ENCODE measurements at regions of chr5 and their contacts with region 1.

Region 1: DNA sequence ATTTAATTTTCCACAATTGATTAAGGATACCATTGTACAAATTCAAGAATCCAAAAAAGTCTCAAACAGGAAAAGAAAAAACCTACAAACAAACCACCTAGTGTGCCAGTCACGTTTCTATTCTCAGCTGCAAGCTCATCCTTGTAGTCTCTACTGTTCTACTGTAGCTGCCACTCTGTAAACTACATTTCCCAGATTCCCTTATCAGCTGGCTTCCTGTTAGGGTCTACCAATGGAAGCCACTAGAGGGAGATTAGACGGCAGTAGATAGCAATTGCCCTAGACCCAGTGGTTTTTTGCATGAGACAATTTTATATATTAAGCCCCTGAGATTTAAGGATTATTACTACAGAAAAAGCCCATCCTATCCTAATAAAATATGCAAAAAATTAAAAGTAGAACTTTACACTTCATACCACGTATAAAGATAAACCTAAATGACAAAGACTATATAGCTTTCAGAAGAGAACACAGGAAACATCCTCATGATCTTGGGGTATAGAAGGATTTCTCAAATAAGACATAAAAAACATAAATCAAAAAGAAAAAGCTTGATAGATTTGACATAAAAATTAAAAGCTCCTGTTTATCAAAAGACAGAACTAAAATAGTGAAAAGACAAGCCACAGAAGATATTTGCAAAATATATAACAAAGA is 37.4 kb downstream of the P4HA2 start:
- DNase-seq: peak; percentile 78
- H3K4me3 ChIP-seq: no peak overlapping the region
- H3K27ac ChIP-seq: no peak overlapping the region
- H3K4me1 ChIP-seq: no peaks in the 10 kb centered on the region
- H3K27me3 ChIP-seq: no peaks in the 10 kb centered on the region
- CTCF ChIP-seq: peak; percentile 75 to 76
- POLR2A ChIP-seq: no peak

Region 2: DNA sequence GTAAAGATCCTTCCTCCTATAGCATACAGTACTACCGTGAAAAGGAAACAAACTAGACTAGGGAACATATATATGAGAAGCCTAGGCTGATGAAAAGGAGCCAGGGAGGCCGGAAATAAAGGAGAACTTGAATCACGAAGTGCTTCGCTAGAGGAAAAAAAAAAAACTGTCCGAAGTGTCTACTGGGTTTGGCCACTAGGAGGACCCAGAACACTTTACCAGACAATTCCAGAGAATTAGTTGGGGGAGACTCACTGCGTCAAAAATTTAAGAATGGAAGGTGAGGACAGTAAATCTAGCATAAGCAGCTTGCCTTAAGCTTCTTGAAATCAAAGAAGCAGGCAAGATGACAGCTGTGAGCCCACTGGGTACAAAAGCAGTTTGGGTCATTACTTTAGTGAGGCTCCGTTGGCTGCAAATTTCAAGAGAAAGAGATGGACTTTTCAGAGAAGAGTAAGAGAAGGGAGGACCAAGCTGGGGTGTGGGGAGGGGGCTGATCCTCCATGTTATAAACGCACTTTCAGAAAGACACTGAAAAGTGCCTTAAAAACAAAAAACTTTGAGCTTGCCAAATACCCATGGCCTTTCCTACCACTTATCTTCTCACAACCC is 10.0 kb before region 1 on chr5:
- CTCF ChIA-PET with region 1: interaction called, 30 read pairs
- POLR2A ChIA-PET with region 1: no interaction called
- dilution Hi-C with region 1: no loop called
- intact Hi-C with region 1: no loop called
- DNase-seq: peak; percentile 78
- H3K4me3 ChIP-seq: no peak overlapping the region
- H3K27ac ChIP-seq: no peak overlapping the region
- H3K4me1 ChIP-seq: peaks cover 16% of the 10 kb centered on the region
- H3K27me3 ChIP-seq: no peaks in the 10 kb centered on the region
- CTCF ChIP-seq: peak; percentile 70 to 74
- POLR2A ChIP-seq: no peak

Region 3: DNA sequence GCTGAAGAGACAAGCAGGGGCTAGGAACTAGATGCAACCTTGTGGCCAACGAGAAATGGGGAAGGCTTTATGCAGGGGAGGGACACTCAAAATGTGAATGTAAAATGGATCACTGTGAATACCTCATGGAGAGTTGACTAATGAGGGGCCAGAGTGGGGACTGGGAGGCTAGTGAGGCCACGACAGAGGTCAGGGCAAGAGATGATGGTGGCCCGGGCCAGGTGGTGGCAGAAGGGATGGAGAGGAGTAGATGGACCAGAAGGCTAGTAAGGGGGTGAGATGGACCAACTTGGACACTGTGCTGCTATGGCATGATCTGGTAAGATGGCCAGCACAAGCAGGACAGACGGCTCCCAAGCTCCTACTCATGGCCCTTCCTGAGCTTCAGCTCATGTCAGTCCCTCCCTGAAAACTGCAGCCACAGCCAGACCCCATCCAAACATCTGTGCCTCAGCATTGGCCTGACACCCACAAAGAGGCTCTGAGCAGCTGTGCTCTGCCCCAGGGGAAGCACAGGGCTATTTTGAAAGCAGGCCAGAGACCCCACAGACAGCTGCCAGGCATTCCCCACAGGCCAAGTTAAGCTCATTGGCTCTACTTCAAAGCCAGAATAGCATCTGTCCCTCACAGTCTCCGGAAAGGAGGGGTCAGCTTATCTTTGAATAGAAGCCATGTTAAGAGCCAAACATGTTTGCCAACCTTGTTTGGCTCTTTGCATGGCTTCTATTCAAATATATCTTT is 15.3 kb after region 1 on chr5:
- CTCF ChIA-PET with region 1: interaction called, 21 read pairs
- POLR2A ChIA-PET with region 1: no interaction called
- dilution Hi-C with region 1: no loop called
- intact Hi-C with region 1: no loop called
- DNase-seq: peak; percentile 53
- H3K4me3 ChIP-seq: no peak overlapping the region
- H3K27ac ChIP-seq: no peak overlapping the region
- H3K4me1 ChIP-seq: no peaks in the 10 kb centered on the region
- H3K27me3 ChIP-seq: no peaks in the 10 kb centered on the region
- CTCF ChIP-seq: no peak
- POLR2A ChIP-seq: no peak

Region 4: GRCh38 chr5:132215329-132215728 is 25.0 kb after region 1 on chr5:
- CTCF ChIA-PET with region 1: interaction called, 12 read pairs
- POLR2A ChIA-PET with region 1: no interaction called
- dilution Hi-C with region 1: no loop called
- intact Hi-C with region 1: no loop called
- DNase-seq: peak; percentile 80
- H3K4me3 ChIP-seq: no peak overlapping the region
- H3K27ac ChIP-seq: peak overlapping the region; percentile 52
- H3K4me1 ChIP-seq: peaks cover 5% of the 10 kb centered on the region
- H3K27me3 ChIP-seq: no peaks in the 10 kb centered on the region
- CTCF ChIP-seq: no peak
- POLR2A ChIP-seq: no peak

Region 5: DNA sequence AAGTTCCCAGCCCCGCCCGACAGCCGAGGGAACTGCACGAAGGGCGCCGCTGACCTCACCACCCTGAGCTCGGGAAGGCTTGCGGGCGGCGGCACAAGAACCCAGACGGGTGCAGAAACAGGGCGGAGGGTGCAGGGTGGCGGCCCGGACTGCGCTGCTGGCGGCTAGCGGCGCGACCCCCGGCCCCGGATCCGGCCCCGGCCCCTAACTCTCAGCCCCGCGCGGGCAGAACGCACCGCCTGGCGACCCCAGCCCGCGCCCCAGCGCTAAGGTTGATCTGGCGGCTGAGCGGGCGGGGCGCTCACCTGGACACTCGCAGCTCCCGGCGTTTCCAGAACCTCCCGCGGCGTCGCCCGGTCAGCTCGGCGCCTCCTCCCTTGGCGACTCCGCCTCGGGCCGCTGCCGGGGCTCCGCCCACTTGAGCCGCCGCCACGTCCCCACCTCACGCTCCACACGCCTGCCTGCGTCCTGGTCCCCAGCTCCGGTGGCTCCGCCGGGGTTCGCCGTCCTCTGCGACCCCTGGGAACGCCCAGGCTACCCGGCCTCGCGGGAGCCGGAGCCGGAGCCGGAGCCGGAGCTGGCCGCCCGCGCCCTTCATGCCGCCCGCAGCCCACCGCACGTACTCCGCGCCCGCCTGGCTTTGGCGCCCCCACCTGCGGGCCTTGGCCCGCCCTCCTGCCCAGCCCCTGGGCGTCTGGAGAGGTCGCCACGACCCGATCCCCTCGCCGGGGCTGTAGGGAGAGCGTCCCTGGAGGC is 37.4 kb after region 1 on chr5 and contains the start of gene P4HA2:
- CTCF ChIA-PET with region 1: interaction called, 15 read pairs
- POLR2A ChIA-PET with region 1: no interaction called
- dilution Hi-C with region 1: no loop called
- intact Hi-C with region 1: loop called (anchors 2 kb)
- DNase-seq: peak; percentile 71
- H3K4me3 ChIP-seq: peak within 1 kb of the TSS; percentile 44 to 61 (median 46)
- H3K27ac ChIP-seq: peak within 1 kb of the TSS; percentile 28
- H3K4me1 ChIP-seq: no peaks in the 10 kb centered on the region
- H3K27me3 ChIP-seq: peaks cover 0 to 1% of the 10 kb centered on the region in 2 experiments
- CTCF ChIP-seq: no peak
- POLR2A ChIP-seq: peak; percentile 56
- total RNA-seq, gene P4HA2: 37.4 and 37.6 TPM in 2 replicates

Region 6: DNA sequence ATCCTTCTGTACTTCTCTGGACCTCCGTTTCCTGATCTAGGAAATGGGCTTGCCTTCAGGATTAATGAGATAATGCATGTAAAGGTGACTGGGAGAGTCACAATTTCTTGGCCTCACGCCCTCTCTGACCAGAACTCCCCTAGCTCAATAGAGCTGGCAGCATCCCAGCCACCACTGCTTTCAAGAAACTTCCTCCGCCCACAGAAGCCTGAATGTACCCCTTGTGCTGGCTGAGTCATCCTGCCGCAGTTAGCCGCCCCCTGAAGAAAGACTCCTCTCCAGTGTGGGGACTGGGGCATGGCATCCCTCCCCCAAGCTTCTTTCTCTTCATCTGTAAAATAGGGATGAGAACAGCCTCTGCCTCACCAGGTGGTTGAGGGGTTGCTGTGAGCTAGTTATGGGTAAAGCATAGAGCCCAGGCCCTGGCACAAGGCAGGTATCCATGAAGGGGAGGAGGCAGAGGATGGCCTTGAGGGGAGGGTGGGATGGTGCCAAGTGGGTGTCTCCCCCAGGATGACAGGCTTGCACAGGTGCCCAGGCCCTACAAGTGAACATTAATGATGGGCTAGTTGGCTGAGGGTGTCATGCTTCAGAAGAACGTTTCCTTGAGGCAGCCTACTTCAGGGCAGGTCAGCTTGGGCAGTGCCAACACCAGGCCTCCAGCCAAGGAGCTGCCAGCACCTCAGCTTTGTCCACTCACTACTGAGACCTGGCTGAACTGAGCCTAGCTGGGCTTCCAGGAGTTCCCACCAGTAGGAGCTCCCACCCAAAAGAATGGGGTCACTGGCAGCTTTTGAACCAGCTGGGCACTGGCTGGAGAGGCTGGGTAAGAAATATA is 70.6 kb after region 1 on chr5:
- CTCF ChIA-PET with region 1: interaction called, 5 read pairs
- POLR2A ChIA-PET with region 1: no interaction called
- dilution Hi-C with region 1: no loop called
- intact Hi-C with region 1: loop called (anchors 1 kb)
- DNase-seq: peak; percentile 91
- H3K4me3 ChIP-seq: no peak overlapping the region
- H3K27ac ChIP-seq: peak overlapping the region; percentile 96
- H3K4me1 ChIP-seq: peaks cover 76% of the 10 kb centered on the region
- H3K27me3 ChIP-seq: no peaks in the 10 kb centered on the region
- CTCF ChIP-seq: no peak
- POLR2A ChIP-seq: no peak